HCT116 (cell line): ENCODE measurements at regions of chr19 and their contacts with region 1.

Region 1: GRCh38 chr19:8513687-8514504 is at the start of gene ZNF414:
- DNase-seq: peak; percentile 97
- ATAC-seq: peak; percentile 85
- H3K4me3 ChIP-seq: peak within 1 kb of the TSS; percentile 59 to 78
- H3K27ac ChIP-seq: peak within 1 kb of the TSS; percentile 95
- H3K4me1 ChIP-seq: peaks cover 21 to 41% of the 10 kb centered on the region in 2 experiments
- H3K27me3 ChIP-seq: no peaks in the 10 kb centered on the region
- CTCF ChIP-seq: no peak
- POLR2A ChIP-seq: peak; percentile 94
- RAD21 ChIP-seq: no peak
- total RNA-seq, gene ZNF414: 31.9 TPM

Region 2: DNA sequence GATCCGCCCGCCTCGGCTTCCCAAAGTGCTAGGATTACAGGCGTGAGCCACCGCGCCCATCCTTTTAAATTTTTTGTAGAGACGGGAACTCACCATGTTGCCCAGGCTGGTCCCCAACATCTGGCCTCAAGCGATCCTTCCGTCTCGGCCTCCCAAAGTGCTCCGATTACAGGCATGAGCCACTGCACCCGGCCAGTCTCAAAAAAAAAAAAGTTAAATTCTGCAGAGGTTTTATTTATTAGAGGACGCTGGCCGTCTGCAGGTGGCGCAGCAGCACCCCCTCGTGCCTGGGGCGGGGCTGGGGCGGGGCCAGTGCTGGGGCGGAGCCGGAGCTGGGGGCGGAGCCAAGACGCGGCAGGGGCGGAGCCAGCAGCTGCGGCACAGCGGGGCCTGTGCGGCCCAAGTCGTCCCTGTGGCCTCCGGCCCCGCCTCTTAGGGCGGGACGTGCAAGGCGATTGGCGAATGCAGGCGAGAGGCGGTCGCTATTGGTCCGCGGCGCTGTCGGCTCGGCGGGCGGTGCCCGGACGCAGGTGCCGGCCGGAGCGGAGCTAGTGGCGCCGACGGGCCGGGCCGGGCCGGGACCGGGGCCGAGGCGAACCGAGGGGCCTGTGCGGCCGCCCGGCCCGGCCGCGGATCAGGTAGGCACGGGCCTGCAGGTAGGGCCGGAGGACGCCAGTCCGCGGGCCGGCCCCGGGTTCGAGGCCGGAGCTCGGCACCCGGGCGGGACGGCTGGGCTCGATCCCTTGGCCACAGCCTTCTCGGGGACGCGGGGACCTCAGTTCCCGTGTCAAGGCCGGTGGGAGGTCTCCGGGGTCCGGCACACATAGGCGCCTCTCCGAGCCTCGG is 100.9 kb before region 1 on chr19 and contains the start of gene MARCHF2:
- CTCF ChIA-PET with region 1: interaction called, 5 read pairs
- POLR2A ChIA-PET with region 1: interaction called, 11 read pairs
- RAD21 ChIA-PET with region 1: interaction called, 3 read pairs
- intact Hi-C with region 1: loop called (anchors 10 kb)
- DNase-seq: peak; percentile 90
- ATAC-seq: peak; percentile 99
- H3K4me3 ChIP-seq: peak within 1 kb of the TSS; percentile 66 to 67
- H3K27ac ChIP-seq: peak within 1 kb of the TSS; percentile 57
- H3K4me1 ChIP-seq: peaks cover 23 to 24% of the 10 kb centered on the region in 2 experiments
- H3K27me3 ChIP-seq: no peaks in the 10 kb centered on the region
- CTCF ChIP-seq: peak; percentile 45 to 63 (median 48); a peak in 5 of 6 replicates
- POLR2A ChIP-seq: no peak
- RAD21 ChIP-seq: peak; percentile 62
- total RNA-seq, gene MARCHF2: 22.5 TPM

Region 3: DNA sequence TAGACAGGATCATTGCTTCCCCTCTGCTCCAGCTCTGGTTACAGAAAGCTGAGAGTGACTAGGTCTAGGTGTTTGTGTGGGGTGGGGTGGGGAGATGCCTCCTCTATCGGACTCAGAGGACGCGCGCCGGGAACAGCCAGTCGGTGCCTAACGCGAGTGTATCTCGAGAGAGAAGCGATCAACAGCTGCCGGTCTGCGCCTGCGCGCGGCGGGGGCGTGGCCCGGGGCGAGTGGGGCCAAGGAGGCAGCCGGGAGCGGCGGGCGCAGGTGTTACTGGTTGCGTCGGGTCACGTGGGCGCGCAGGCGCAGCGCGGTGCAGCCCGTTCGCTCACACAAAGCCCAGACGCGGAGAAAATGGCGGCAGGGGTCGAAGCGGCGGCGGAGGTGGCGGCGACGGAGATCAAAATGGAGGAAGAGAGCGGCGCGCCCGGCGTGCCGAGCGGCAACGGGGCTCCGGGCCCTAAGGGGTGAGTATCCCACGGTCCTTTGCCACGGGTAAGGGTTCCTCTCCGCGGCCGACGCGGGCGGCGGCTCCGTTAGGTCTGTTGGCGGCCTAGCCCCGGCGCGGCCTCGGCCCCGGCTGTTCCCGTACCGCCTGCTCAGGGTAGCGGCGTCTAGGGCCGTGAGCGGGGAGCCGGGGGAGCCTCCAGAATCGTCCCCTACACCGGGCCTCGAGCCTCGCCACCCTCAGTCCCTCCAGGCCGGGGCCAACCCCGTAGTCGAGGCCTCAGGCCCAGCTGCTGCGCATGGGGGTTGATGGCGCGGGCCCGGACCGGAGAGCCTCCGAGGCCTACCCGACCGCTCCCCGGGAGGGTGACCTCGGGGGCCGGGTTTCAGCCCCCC is 69.0 kb before region 1 on chr19 and contains the start of gene HNRNPM:
- CTCF ChIA-PET with region 1: no interaction called
- POLR2A ChIA-PET with region 1: interaction called, 12 read pairs
- RAD21 ChIA-PET with region 1: no interaction called
- intact Hi-C with region 1: no loop called
- DNase-seq: peak; percentile 88
- ATAC-seq: peak; percentile 94
- H3K4me3 ChIP-seq: peak within 1 kb of the TSS; percentile 65 to 78
- H3K27ac ChIP-seq: peak within 1 kb of the TSS; percentile 98
- H3K4me1 ChIP-seq: peaks cover 22 to 46% of the 10 kb centered on the region in 2 experiments
- H3K27me3 ChIP-seq: no peaks in the 10 kb centered on the region
- CTCF ChIP-seq: no peak
- POLR2A ChIP-seq: peak; percentile 94
- RAD21 ChIP-seq: no peak
- total RNA-seq, gene HNRNPM: 298 TPM

Region 4: DNA sequence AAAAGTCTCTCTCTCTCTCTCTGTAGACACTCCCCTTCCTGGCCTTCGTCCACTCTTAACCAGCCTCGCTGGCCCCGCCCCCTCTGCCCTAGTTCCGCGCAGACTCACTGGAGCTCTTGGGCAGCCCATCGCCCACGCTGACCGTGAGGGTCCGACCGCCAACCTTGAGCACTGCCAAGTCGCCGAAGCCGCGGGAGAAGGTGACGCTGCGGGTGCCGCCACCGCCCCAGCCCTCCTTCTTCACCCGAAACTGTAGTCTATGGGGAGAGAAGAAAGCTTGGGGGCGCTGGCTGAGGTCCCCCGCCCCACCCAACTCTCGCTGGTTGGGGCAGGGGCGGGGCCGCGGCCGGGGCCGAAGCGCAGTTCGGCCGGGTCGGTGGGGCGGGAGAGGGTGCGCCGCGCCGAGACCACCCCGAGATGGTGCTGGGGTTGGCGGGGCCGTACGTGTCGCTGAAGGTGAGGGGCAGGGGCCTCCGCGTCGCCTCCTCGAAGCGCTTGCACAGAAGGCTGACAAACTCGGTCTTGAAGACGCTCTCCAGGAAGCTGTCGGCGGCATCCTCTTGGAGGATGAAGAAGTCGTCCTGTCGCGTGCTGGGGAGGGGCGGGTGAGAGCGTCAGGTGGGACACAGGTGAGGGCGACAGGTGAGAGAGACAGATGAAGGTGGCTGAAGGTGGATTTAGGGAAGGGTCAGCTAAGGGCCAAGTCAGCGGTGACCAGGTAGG is 12.6 kb after region 1 on chr19:
- CTCF ChIA-PET with region 1: interaction called, 7 read pairs
- POLR2A ChIA-PET with region 1: interaction called, 69 read pairs
- RAD21 ChIA-PET with region 1: interaction called, 3 read pairs
- intact Hi-C with region 1: no loop called
- DNase-seq: peak; percentile 75
- ATAC-seq: peak; percentile 70
- H3K4me3 ChIP-seq: peak overlapping the region; percentile 63 to 89
- H3K27ac ChIP-seq: peak overlapping the region; percentile 66
- H3K4me1 ChIP-seq: peaks cover 3 to 20% of the 10 kb centered on the region in 2 experiments; a peak in 3 of 4 replicates
- H3K27me3 ChIP-seq: no peaks in the 10 kb centered on the region
- CTCF ChIP-seq: no peak
- POLR2A ChIP-seq: peak; percentile 35
- RAD21 ChIP-seq: no peak